ENCODE measurements at regions of chr4 and their contacts with region 1.

Region 1: DNA sequence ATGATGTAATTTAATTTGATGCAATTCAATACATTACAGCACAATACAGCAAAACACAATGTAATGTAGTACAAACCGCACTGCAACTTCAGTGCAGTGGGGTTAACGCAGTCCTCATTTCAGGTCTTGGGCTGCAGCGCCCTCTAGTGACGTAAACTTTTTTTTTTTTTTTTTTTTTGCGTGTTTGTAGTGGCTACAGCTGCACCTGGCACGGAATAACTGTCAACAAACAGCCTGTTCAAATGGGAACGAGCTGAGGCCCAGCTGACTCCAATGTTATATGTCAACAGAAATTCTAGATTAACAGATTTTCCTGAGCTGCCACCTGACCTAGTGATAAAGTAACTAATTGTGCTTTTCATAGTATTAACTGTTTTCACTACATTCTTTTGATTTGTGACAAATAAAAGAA is 33.5 kb upstream of the RASSF6 start:
- DNase-seq: peak in 5 of 9 donors; percentile 3 to 32 (median 15)
- ATAC-seq: peak; percentile 61
- H3K4me3 ChIP-seq: no peak overlapping the region
- H3K4me3 Mint-ChIP-seq: no peak overlapping the region
- H3K27ac ChIP-seq: no peak overlapping the region
- H3K27ac Mint-ChIP-seq: no peak overlapping the region
- H3K4me1 ChIP-seq: no peaks in the 10 kb centered on the region
- H3K4me1 Mint-ChIP-seq: no peaks in the 10 kb centered on the region
- H3K27me3 ChIP-seq: no peaks in the 10 kb centered on the region
- H3K27me3 Mint-ChIP-seq: peaks cover 0 to 20% (median 12%) of the 10 kb centered on the region in 5 donors

Region 2: DNA sequence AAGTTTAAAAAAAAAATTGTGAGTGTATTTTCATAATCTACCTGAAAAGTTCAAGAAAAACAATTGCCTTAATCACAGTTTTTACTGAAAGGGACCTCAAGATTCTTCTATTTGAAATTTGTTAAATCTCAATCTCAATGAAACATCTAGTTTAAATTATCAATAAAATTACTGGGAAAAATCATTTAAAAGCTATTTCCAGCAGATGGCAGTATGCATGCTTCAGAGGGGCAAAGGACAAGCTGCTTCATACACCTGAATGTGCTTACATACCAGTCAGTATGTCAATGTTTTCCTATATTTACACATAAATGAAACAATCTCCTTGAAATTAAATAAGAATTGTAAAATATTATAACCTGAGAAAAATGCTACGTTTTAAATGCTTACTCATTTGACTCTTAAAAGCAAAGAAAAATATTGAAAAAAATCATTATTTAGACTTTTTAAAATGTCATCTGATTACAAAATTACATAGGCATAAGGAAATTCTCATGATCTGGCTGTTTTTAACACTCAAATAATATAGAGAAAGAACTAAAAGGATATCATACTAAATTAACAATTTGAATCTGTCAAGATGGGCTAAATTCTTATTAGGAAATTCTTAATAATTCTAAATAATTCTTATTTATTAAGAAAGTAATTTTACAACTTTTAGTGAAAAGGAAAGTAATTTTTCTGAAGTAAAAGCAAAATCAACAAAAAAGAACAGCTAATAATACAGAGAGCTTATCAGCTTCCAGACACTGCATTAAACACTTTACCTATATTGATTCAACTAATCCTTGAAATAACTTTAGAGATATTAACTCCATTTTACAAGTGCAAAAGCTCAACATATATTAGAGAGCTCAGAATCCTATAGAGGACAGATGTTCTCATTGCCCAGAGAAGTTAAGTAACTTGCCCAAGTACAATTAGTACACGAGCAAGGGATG is 1326.7 kb before region 1 on chr4:
- CTCF ChIA-PET with region 1: no interaction called
- POLR2A ChIA-PET with region 1: no interaction called
- intact Hi-C with region 1: loop called in 1 of 2 experiments (anchors 10 kb)
- DNase-seq: peak in 1 of 9 donors; percentile 12
- ATAC-seq: no peak
- H3K4me3 ChIP-seq: no peak overlapping the region
- H3K4me3 Mint-ChIP-seq: no peak overlapping the region
- H3K27ac ChIP-seq: no peak overlapping the region
- H3K27ac Mint-ChIP-seq: no peak overlapping the region
- H3K4me1 ChIP-seq: no peaks in the 10 kb centered on the region
- H3K4me1 Mint-ChIP-seq: no peaks in the 10 kb centered on the region
- H3K27me3 ChIP-seq: no peaks in the 10 kb centered on the region
- H3K27me3 Mint-ChIP-seq: peaks cover 0 to 22% (median 10%) of the 10 kb centered on the region in 5 donors

Region 3: GRCh38 chr4:72701987-72702819 is 951.5 kb before region 1 on chr4:
- CTCF ChIA-PET with region 1: no interaction called
- POLR2A ChIA-PET with region 1: no interaction called
- intact Hi-C with region 1: loop called (anchors 1 to 5 kb)
- DNase-seq: peak in 6 of 9 donors; percentile 10 to 32 (median 22)
- ATAC-seq: peak; percentile 56
- H3K4me3 ChIP-seq: no peak overlapping the region
- H3K4me3 Mint-ChIP-seq: peak overlapping the region in 9 of 10 donors; percentile 42 to 85 (median 83)
- H3K27ac ChIP-seq: no peak overlapping the region
- H3K27ac Mint-ChIP-seq: peak overlapping the region in 2 of 9 donors; percentile 3 to 71
- H3K4me1 ChIP-seq: no peaks in the 10 kb centered on the region
- H3K4me1 Mint-ChIP-seq: peaks cover 0 to 6% (median 0%) of the 10 kb centered on the region in 7 donors
- H3K27me3 ChIP-seq: no peaks in the 10 kb centered on the region
- H3K27me3 Mint-ChIP-seq: peaks cover 0 to 14% (median 6%) of the 10 kb centered on the region in 5 donors

Region 4: GRCh38 chr4:73311428-73311827 is 342.3 kb before region 1 on chr4:
- CTCF ChIA-PET with region 1: interaction called, 3 read pairs
- POLR2A ChIA-PET with region 1: no interaction called
- intact Hi-C with region 1: loop called (anchors 1 to 2 kb)
- DNase-seq: peak in 1 of 9 donors; percentile 4
- ATAC-seq: no peak
- H3K4me3 ChIP-seq: no peak overlapping the region
- H3K4me3 Mint-ChIP-seq: no peak overlapping the region
- H3K27ac ChIP-seq: no peak overlapping the region
- H3K27ac Mint-ChIP-seq: no peak overlapping the region
- H3K4me1 ChIP-seq: no peaks in the 10 kb centered on the region
- H3K4me1 Mint-ChIP-seq: peaks cover 0 to 4% (median 0%) of the 10 kb centered on the region in 7 donors
- H3K27me3 ChIP-seq: no peaks in the 10 kb centered on the region
- H3K27me3 Mint-ChIP-seq: no peaks in the 10 kb centered on the region

Region 5: DNA sequence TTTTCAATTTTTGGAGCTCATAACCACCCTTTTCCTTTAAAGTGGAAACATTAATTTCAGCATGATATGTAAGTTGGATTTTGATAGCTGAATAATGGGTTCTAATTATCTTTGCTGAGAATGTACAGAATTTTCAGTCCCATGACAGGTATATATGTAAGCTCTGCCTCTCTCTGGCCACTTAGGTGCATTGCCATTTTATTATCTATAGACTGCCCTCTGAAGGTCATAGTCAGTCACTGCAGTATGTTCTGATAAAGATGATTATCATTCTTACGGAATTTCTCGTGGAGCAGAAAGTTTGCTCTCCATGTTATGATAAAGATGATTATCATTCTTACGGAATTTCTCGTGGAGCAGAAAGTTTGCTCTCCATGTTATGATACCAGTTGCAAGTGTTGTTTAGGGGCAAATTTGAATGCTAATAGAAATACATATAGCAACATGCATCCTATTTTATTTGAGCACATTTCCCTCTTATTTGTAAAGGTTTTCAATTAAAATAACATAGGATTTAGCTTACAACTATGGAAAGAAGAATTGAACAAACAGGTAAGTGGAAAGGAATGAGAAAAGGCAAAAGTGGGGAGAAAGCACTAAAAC is 207.3 kb before region 1 on chr4:
- CTCF ChIA-PET with region 1: no interaction called
- POLR2A ChIA-PET with region 1: no interaction called
- intact Hi-C with region 1: loop called in 1 of 2 experiments (anchors 5 kb)
- DNase-seq: peak in 5 of 9 donors; percentile 1 to 35 (median 18)
- ATAC-seq: peak; percentile 86
- H3K4me3 ChIP-seq: no peak overlapping the region
- H3K4me3 Mint-ChIP-seq: no peak overlapping the region
- H3K27ac ChIP-seq: no peak overlapping the region
- H3K27ac Mint-ChIP-seq: no peak overlapping the region
- H3K4me1 ChIP-seq: no peaks in the 10 kb centered on the region
- H3K4me1 Mint-ChIP-seq: no peaks in the 10 kb centered on the region
- H3K27me3 ChIP-seq: peaks cover 0 to 5% of the 10 kb centered on the region in 2 donors
- H3K27me3 Mint-ChIP-seq: peaks cover 2 to 25% (median 16%) of the 10 kb centered on the region in 5 donors

Region 6: DNA sequence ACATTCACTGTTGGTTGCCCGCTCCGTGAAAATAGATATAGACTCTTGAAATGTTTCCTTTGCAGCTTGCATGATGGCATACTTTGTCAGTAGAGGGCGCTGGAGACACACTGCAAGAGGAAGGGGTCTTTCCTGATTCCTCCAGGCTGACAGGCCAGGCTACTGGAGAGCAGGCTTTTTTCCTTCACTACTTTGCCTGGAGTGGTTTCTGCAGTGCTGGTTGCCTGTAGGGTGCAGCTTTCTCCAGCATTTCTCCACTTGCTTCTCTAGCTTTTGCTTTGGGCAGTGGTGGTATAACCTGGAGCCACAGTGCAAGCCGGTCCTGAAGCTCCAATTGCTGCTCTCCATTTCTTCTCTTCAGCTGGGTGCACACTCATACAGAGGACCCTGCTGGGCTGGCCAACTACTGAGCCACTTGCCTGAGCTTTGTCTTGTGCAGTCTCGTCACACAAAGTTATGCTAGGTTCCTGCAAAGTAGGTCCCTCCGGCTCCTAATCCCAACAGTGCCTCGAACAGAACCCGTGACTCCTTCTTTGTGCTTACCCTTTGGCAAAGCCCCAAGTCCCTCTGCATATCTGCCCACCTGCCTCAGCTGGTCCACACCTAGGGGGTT is 79.8 kb before region 1 on chr4:
- CTCF ChIA-PET with region 1: no interaction called
- POLR2A ChIA-PET with region 1: no interaction called
- intact Hi-C with region 1: loop called in 1 of 2 experiments (anchors 2 kb)
- DNase-seq: peak in 3 of 9 donors; percentile 7 to 9 (median 9)
- ATAC-seq: peak; percentile 24
- H3K4me3 ChIP-seq: no peak overlapping the region
- H3K4me3 Mint-ChIP-seq: no peak overlapping the region
- H3K27ac ChIP-seq: no peak overlapping the region
- H3K27ac Mint-ChIP-seq: no peak overlapping the region
- H3K4me1 ChIP-seq: no peaks in the 10 kb centered on the region
- H3K4me1 Mint-ChIP-seq: peaks cover 0 to 2% (median 0%) of the 10 kb centered on the region in 7 donors
- H3K27me3 ChIP-seq: no peaks in the 10 kb centered on the region
- H3K27me3 Mint-ChIP-seq: peaks cover 4 to 13% (median 8%) of the 10 kb centered on the region in 5 donors

Region 7: DNA sequence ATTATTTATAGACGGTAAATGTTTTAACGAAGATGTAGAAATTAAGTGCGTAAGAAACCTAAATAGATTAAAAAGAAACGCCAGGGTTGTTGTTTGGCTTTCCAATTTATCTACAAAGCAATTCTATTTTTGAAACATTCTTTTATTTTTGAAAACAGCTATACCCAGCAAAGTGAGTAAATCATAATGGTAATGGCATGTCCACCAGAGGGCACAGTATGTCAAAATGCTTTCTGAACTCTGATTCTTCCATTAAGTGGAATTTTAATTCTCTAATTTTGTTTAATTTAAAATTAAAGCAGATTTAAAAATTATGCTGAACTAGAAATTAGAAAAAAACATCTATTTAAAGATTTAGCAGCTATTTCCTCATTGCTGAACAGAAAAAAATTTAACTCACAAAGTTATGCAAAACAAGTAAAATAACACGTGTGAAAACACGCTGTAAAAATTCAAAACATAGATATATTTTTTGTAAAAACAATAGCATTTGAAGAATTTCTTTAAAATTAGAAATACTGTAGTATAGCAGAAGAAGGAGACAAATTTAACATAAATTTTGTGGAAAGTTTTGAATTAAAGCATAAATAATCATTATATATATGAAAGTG is 60.0 kb before region 1 on chr4:
- CTCF ChIA-PET with region 1: no interaction called
- POLR2A ChIA-PET with region 1: no interaction called
- intact Hi-C with region 1: loop called (anchors 1 kb)
- DNase-seq: peak in 1 of 9 donors; percentile 15
- ATAC-seq: no peak
- H3K4me3 ChIP-seq: no peak overlapping the region
- H3K4me3 Mint-ChIP-seq: no peak overlapping the region
- H3K27ac ChIP-seq: no peak overlapping the region
- H3K27ac Mint-ChIP-seq: no peak overlapping the region
- H3K4me1 ChIP-seq: no peaks in the 10 kb centered on the region
- H3K4me1 Mint-ChIP-seq: no peaks in the 10 kb centered on the region
- H3K27me3 ChIP-seq: no peaks in the 10 kb centered on the region
- H3K27me3 Mint-ChIP-seq: peaks cover 0 to 8% (median 0%) of the 10 kb centered on the region in 5 donors

Measured in naive thymus-derived CD4-positive, alpha-beta T cell (primary cell).